ENCODE measurements at regions of chr17 and their contacts with region 1.

Region 1: DNA sequence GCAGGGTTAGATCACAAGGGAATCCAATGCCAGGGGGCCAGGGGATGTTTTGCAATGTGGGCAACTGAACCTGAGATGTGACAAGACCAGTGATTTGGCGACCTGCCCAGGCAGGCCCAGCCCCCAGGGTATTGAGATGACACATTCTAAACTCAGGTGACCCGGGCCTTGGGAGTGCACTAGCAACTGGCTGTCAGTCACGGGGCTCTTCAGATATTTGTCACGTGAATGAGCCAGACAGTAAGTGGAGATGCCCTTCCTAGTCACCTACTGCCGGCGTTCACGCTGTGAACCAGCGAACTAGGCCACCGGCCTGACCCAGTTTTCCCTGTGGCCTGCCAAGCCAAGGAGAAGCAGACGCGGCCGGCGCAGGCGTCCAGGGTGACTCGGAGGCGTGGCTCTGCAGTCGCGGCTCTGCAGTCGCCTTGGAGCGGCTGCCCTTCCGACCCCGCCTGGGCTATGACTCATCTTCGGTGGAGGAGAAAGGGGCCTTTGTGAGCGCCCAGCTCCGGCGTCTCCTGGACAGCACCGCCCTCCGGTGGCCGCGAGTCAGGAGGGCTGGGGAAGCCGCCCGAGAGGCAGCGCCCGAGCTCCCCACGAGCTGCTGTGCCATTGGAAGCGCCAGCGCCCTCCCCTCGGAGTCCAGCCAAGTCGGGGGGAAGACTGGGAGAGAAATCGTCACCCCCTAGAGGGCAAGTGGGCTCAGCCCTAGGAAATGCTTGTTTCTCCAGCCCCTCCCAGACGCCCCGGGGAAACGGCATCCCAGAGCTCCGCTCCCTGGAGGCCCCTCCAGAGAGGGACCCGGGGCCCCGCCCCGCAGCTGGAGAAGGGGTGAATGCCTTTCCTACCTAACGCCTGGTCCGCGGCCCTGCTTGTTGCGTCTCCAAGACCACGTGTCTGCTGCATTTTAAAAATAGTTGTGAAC is 38.8 kb downstream of the WSB1 start:
- DNase-seq: peak; percentile 79 to 97 (median 80)
- H3K4me3 ChIP-seq: peak overlapping the region; percentile 47 to 57
- H3K4me3 Mint-ChIP-seq: peak overlapping the region; percentile 72 to 91 (median 85)
- H3K27ac ChIP-seq: peak overlapping the region; percentile 47
- H3K27ac Mint-ChIP-seq: peak overlapping the region; percentile 68 to 93 (median 87)
- H3K4me1 ChIP-seq: peaks cover 7% of the 10 kb centered on the region
- H3K4me1 Mint-ChIP-seq: peaks cover 9 to 22% (median 17%) of the 10 kb centered on the region in 4 donors
- H3K27me3 ChIP-seq: no peaks in the 10 kb centered on the region
- H3K27me3 Mint-ChIP-seq: no peaks in the 10 kb centered on the region

Region 2: DNA sequence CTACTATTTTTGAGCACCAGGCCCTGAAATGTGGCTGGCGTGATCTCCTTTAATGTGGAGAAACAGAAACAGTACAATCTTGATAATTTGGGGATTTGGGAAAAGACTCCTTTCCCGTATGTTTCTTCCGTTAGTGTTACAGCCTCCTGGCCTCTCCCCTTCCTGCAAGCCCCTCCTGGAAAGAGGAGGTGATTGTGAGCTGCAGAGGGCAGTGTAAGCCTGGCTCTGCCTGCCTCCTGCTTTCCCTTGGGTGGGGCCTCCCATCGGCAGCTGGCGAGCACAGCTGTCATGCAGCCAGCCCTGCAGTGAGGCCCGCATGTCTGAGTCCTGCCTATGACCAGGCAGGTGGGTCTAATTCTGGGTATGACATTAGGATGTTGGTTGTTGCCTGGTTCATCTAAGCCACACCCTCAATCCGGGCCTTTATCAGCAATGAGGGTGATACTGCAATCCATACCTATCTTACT is 87.5 kb before region 1 on chr17:
- CTCF ChIA-PET with region 1: interaction called, 155 read pairs
- POLR2A ChIA-PET with region 1: no interaction called
- intact Hi-C with region 1: loop called (anchors 2 kb)
- DNase-seq: peak; percentile 5 to 38 (median 10)
- H3K4me3 ChIP-seq: no peak overlapping the region
- H3K4me3 Mint-ChIP-seq: no peak overlapping the region
- H3K27ac ChIP-seq: no peak overlapping the region
- H3K27ac Mint-ChIP-seq: no peak overlapping the region
- H3K4me1 ChIP-seq: no peaks in the 10 kb centered on the region
- H3K4me1 Mint-ChIP-seq: no peaks in the 10 kb centered on the region
- H3K27me3 ChIP-seq: no peaks in the 10 kb centered on the region
- H3K27me3 Mint-ChIP-seq: peaks cover 0 to 9% of the 10 kb centered on the region in 2 donors

Region 3: GRCh38 chr17:27353461-27354050 is 20.8 kb after region 1 on chr17:
- CTCF ChIA-PET with region 1: interaction called, 8 read pairs
- POLR2A ChIA-PET with region 1: interaction called, 3 read pairs
- intact Hi-C with region 1: loop called (anchors 1 kb)
- DNase-seq: peak; percentile 82 to 88 (median 83)
- H3K4me3 ChIP-seq: peak overlapping the region; percentile 36 to 68
- H3K4me3 Mint-ChIP-seq: peak overlapping the region; percentile 68 to 89 (median 86)
- H3K27ac ChIP-seq: peak overlapping the region; percentile 80
- H3K27ac Mint-ChIP-seq: peak overlapping the region; percentile 75 to 97 (median 95)
- H3K4me1 ChIP-seq: peaks cover 16% of the 10 kb centered on the region
- H3K4me1 Mint-ChIP-seq: peaks cover 10 to 27% (median 19%) of the 10 kb centered on the region in 4 donors
- H3K27me3 ChIP-seq: no peaks in the 10 kb centered on the region
- H3K27me3 Mint-ChIP-seq: no peaks in the 10 kb centered on the region

Measured in CD4-positive, alpha-beta memory T cell (primary cell).